Activated CD4-positive, alpha-beta memory T cell treated with anti-CD3 and anti-CD28 coated beads for 36 hours (primary cell): ENCODE measurements at regions of chr15 and their contacts with region 1.

Region 1: DNA sequence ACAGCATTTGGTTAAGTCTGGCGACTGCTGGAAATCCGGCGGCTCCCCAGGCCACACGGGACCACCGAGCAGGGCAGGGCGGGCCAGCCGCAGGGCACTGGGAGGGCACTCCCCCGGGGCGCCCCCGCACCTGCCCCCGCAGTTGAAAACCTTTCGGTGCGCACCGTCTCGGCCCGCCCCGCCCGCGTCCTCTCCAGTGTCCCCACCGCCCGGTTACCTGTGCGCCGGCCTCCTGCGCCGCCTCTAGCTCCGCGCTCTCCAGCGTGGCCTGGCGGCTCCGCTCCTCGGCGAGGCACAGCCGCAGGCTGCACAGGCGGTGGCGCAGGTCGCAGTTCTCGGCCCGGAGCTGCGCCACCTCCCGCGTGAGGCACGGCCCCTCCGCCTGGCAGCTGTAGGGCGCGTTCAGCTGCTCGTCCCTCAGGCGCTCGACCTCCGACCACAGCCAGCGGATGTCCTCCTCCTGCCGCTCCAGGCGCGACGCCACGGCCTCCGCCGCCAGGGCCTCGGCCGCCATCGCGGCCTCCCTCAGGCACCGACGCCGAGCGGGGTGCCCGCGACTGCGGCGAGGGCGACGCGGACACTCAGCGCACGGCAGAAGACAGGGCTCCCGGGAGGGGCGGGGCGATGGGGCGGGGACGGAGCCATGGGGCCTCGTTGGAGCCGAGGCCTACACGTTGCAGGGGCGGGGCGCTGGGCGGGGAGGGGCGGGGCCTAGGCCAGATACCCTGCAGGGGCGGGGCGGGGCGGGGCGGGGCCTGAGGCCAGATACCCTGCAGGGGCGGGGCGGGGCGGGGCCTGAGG is at the start of gene TARS3:
- DNase-seq: peak; percentile 97
- H3K4me3 Mint-ChIP-seq: peak within 1 kb of the TSS; percentile 87
- H3K27ac Mint-ChIP-seq: peak within 1 kb of the TSS; percentile 85
- H3K4me1 Mint-ChIP-seq: peaks cover 14% of the 10 kb centered on the region
- H3K27me3 Mint-ChIP-seq: no peaks in the 10 kb centered on the region
- total RNA-seq, gene TARS3: 10.8 to 11.7 TPM

Region 2: DNA sequence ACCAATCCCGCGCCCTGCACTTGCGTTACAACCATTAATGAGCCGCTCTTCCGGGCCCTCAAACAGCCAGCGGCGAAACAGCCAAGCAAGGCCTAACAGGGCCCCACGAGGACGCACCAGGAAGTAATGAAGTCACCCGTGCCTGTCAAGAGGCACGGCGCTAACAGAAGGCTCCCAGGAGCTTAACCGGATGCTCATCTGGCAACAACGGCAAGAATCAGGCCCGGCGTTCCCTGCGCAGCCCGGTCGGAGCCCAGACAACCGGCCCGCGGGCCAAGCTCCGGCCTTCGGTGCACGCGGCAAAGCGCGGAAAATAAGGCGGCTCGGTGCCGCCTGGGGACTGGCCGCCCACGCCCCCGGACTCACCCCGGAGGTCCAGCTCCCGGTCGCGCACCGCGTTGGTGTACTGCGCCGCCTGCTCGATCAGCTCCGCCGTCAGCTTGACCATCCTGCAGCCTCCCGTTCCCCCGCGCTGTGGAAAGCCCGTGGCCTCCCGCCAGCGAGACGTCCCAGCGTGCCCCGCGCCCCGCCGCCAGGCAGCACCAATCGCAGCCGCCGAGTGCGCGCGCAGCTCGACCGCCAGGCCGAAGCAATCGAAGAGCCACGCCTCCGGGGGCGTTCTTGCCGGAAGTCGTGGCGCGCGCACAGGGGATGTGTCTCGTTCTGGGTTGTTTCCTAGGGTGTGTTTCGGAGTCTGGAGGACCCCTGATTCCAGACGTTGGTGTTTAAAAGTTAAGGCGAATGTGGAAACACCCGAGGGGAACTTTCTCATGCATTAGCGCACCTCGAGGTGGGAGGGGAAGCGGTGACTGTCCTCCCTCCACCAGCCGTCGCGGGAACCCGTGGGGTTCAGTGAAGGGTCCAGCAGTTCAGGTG is 429.1 kb before region 1 on chr15 and contains the start of gene SNRPA1:
- CTCF ChIA-PET with region 1: no interaction called
- POLR2A ChIA-PET with region 1: interaction called, 8 read pairs
- intact Hi-C with region 1: loop called (anchors 1 kb)
- DNase-seq: peak; percentile 98
- H3K4me3 Mint-ChIP-seq: peak within 1 kb of the TSS; percentile 95
- H3K27ac Mint-ChIP-seq: peak within 1 kb of the TSS; percentile 98
- H3K4me1 Mint-ChIP-seq: peaks cover 38% of the 10 kb centered on the region
- H3K27me3 Mint-ChIP-seq: no peaks in the 10 kb centered on the region
- total RNA-seq, gene SNRPA1: 167 to 173 TPM

Region 3: DNA sequence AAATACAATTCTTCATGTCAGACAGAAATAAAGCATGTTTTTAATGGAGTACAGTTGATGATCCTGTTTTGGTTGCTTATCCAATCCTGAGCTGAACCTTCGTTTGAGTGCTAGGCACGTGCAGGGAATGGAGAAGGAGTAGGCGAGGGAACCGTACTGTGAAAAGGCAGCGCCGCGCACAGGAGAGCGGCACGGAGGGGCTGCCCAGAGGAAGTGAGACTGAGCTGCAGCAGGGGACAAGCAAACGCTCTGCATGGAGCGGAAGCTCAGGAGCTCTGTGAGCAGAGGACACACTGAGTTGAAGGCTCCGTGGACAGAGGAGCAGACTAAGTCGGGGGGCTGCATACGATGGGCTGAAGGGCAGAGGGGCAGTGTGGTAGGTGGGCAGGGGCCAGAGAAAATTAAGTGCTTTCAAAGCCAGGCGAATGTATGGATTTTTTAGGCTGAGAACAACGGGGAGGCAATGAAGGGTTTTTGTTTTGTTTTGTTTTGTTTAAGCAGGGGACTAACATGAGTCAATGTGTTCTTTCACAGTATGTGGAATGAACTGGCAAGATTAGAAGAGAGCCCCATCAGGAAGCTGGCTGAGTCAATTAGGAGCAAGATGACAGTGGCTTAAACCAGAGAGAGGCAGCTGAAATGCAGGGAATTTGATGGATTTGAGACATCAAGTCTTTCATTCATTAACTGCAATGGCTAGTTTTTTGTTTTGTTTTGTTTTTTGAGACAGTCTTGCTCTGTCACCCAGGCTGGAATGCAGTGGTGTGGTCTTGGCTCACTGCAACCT is 48.1 kb before region 1 on chr15:
- CTCF ChIA-PET with region 1: no interaction called
- POLR2A ChIA-PET with region 1: no interaction called
- intact Hi-C with region 1: loop called (anchors 1 kb)
- DNase-seq: peak; percentile 32
- H3K4me3 Mint-ChIP-seq: peak overlapping the region; percentile 36
- H3K27ac Mint-ChIP-seq: peak overlapping the region; percentile 84
- H3K4me1 Mint-ChIP-seq: peaks cover 12% of the 10 kb centered on the region
- H3K27me3 Mint-ChIP-seq: no peaks in the 10 kb centered on the region

Region 4: GRCh38 chr15:101781927-101782326 is 57.9 kb after region 1 on chr15:
- CTCF ChIA-PET with region 1: no interaction called
- POLR2A ChIA-PET with region 1: no interaction called
- intact Hi-C with region 1: no loop called
- DNase-seq: no peak
- H3K4me3 Mint-ChIP-seq: no peak overlapping the region
- H3K27ac Mint-ChIP-seq: no peak overlapping the region
- H3K4me1 Mint-ChIP-seq: no peaks in the 10 kb centered on the region
- H3K27me3 Mint-ChIP-seq: peaks cover 14% of the 10 kb centered on the region